ENCODE measurements at regions of chr15 and their contacts with region 1.

Region 1: DNA sequence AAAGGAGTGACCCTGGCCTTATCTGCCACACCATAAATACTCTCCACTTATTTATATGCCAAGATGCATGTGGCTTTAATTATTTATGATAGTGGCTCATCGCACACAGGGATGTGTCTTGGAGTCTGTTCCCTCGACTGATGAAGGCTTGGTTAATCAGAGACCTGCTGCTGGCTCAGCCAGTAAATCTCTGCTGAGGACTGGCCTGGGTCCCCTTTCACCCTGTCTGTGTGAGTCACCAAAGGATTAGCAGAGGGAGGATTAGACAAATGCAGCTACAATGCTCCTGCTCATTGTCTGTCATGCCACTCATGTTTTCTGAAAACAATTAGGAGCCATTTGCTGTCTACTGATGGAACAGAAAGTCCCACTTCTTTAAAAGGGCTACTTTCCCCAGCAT is 226.8 kb downstream of the NTRK3 start:
- DNase-seq: no peak
- ATAC-seq: no peak
- H3K4me3 Mint-ChIP-seq: no peak overlapping the region
- H3K27ac Mint-ChIP-seq: no peak overlapping the region
- H3K4me1 Mint-ChIP-seq: no peaks in the 10 kb centered on the region
- H3K27me3 Mint-ChIP-seq: peaks cover 2% of the 10 kb centered on the region

Region 2: GRCh38 chr15:87619161-87619960 is 410.3 kb before region 1 on chr15:
- CTCF ChIA-PET with region 1: no interaction called
- POLR2A ChIA-PET with region 1: no interaction called
- intact Hi-C with region 1: loop called in 1 of 2 experiments (anchors 5 kb)
- DNase-seq: no peak
- ATAC-seq: no peak
- H3K4me3 Mint-ChIP-seq: no peak overlapping the region
- H3K27ac Mint-ChIP-seq: no peak overlapping the region
- H3K4me1 Mint-ChIP-seq: no peaks in the 10 kb centered on the region
- H3K27me3 Mint-ChIP-seq: peaks cover 2% of the 10 kb centered on the region

Region 3: DNA sequence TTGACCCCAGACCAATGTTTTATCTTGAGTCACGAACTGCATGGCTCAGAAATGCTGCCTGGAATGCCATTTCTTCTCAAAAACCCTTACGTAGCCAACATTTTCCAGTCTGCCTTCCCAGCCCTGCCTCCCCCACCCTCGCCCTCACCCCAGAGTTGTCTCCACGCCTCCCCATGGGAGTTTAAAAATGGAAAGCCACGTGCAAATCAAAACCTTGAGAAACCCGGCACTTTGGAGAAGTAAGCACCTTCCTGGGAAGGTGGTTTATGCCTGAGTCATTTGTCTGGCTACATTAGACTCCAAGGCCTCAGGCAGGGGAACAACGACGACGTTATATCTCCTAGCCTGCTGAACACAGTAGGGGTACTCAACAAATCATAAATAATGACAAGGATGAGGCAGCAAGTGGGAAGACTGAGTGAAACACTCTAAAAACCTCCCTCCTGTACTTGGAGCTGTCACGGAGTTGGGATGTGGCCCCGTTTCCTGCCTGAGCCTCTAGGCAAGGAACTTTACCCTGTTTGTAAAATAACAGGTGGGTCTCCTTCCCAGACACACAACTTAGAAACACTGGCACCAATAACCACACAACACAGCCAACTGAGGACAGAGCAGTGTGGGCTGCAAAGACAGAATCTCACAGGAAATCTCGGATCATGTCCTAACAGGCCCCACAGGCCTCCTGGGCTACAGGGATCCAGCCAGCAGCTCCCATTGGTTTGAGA is 47.8 kb after region 1 on chr15:
- CTCF ChIA-PET with region 1: no interaction called
- POLR2A ChIA-PET with region 1: no interaction called
- intact Hi-C with region 1: no loop called
- DNase-seq: no peak
- ATAC-seq: no peak
- H3K4me3 Mint-ChIP-seq: no peak overlapping the region
- H3K27ac Mint-ChIP-seq: no peak overlapping the region
- H3K4me1 Mint-ChIP-seq: no peaks in the 10 kb centered on the region
- H3K27me3 Mint-ChIP-seq: no peaks in the 10 kb centered on the region